GM18951 (cell line): ENCODE measurements at regions of chr10 and their contacts with region 1.

Region 1: DNA sequence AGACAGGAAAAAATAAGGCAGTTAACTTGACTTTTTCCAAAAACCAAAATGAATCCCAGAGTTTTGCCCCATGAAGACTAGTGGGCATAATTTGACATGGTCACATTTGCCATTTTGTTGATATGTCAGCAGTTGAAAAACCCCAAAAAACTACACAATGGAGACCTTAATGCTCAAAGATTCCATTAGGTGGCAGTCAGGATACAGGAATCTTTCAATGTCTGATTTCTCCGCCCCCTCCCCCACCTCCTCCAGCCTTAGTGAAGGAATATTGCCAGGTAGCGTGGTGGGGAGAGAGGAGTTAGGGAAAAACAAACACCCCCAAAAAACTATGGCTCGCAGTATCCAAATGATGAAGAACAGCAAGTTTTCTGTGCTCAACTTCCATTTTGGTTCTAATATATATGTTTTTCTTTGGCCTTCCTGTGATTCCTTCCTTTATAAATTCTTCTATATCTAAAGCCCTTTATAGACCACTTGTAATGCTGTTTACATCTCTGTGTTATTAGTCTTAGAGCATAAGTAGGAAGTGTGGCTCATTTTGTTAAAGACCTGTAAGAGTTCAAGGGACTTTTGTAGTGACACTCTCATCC is 6.7 kb upstream of the SMNDC1 start:
- POLR2A ChIP-seq: no peak

Region 2: DNA sequence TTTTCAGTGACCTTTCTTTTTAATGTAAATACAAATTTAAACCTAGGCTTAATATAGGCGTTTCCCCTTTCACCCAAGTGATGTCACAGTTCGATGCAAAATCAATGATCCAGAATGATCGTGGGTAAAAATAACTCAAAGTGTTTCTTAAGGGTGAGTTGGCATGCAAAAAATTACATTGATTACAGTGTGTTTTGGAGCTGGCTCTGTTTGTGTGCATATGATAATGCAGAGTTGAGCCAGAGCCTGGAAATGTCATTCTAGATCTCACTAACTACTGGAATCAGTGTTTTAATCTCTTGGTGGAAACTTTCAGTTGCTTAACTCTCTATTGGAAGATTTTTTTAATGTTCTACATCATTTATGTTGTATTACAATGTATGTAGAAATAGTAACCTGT is 176.5 kb before region 1 on chr10:
- in situ Hi-C with region 1: no loop called
- POLR2A ChIP-seq: no peak

Region 3: DNA sequence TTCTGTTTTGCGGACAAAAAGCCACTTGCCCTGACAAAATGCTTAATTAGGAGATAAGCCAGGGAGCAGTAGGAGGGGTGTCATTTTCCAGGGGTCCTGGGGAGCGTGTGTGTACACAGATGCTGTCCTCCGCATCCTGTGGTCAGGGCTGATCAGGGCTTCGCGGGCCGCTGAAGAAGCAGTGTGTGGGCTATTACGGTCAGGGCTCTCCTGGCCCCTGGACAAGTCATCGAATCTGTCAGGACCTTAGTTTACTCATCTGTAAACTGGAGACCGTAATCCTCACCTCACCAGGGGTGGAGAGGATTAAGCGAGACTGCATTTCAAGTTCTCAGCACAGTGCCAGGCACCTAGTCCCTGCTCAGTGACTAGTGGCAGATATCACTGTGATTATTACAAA is 130.0 kb before region 1 on chr10:
- in situ Hi-C with region 1: no loop called
- POLR2A ChIP-seq: no peak

Region 4: DNA sequence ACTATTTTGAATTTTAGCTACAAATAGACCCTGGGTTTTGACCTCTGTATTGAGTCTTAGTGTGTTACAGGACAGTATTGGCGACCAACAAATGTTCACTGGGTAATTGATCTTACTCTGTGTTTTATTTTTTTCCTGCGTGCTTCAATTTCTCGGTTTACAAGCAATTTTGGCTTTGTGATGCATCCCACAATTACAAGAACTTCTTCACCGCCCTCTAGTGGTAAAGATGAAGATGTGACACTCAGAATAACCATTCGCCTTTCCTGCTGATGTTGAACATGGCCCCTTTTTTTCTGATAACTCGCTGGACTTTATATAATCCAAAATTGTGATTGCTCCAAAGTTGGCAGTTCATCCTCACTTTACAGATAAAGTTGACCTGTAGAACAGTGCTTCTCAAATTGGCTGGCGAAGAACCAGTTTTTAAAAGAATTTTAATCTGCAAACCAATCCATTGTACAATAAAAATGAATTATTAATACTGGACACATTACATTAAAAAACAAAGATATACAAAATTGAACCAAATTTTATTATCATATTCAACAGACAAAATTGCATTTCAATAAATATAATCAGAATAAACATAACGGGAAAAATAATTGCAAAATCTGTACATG is 235.8 kb after region 1 on chr10:
- in situ Hi-C with region 1: loop called (anchors 10 kb)
- POLR2A ChIP-seq: no peak